ENCODE measurements at regions of chr20 and their contacts with region 1.

Region 1: DNA sequence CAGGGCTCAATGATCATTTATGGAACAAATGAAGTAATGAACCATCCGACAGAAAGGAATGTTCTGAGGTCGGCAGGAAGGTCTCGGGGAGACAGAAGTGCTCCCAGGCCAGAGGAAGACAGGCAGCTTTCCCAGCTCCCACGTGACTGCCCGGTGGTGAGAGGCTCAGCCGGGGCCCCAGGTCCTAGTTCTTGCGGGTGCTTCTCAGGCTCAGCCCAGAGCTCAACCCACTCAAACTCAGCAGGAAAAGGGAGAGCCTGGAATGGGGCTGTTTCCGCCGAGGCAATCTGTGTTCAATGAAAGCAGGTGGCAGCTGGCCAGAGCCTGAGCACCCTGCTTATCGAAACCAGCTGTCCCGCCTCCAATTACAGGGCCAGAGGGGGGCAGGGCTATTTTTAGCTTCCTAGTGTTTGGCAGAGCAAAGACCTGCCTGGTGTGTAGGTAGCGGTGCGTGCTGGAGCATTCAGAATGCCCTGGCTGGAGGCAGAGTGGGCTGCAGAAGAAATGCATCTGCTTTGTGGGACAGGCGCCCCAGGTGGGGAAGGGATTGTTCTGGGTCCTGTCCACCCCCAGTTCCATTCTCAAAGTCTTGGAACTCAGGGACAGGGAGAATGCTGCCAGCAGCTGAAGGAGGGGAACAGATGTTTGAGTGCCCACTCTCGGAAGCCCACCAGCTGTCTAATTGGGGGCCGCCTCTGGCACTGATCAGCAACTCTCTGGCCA is 145.1 kb downstream of the PREX1 start:
- DNase-seq: peak; percentile 99 to 100
- H3K4me3 ChIP-seq: no peak overlapping the region
- H3K27ac ChIP-seq: peak overlapping the region; percentile 69 to 81 (median 75)
- H3K4me1 ChIP-seq: peaks cover 38 to 52% of the 10 kb centered on the region in 2 donors
- H3K27me3 ChIP-seq: no peaks in the 10 kb centered on the region
- CTCF ChIP-seq: no peak
- POLR2A ChIP-seq: peak in 1 of 2 donors; percentile 57

Region 2: GRCh38 chr20:48828022-48828743 is 145.5 kb after region 1 on chr20:
- intact Hi-C with region 1: loop called (anchors 5 kb)
- DNase-seq: peak; percentile 87
- H3K4me3 ChIP-seq: peak overlapping the region; percentile 43 to 71 (median 49)
- H3K27ac ChIP-seq: peak overlapping the region; percentile 65 to 78 (median 74)
- H3K4me1 ChIP-seq: peaks cover 24 to 60% of the 10 kb centered on the region in 2 donors
- H3K27me3 ChIP-seq: no peaks in the 10 kb centered on the region
- CTCF ChIP-seq: peak in 3 of 6 experiments; percentile 35 to 48 (median 42)
- POLR2A ChIP-seq: peak in 1 of 2 donors; percentile 66

Measured in thyroid gland (tissue), 4 donors.